Upper lobe of right lung (tissue), 1 donor: ENCODE measurements at regions of chr4 and their contacts with region 1.

Region 1: DNA sequence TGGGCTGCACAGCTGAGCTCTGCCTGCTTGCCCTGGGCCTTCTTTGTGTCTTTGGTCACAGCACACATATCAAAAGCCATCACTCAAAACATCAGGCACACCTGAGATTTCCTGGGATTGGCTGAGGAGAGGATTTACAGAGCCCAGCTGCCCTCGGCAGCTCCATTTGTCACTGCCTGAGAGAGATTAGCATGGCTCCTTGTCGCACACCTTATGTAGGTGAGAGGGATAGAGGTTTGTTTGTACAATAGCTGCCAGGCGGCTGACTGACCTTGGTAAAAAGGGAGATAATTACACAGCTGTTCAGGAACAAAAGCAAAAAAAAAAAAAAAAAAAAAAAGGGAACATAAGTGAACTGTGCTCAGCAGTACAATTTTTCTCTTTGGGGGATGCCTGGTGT is 63.2 kb downstream of the MGST2 start:
- DNase-seq: no peak
- ATAC-seq: no peak
- H3K4me3 ChIP-seq: no peak overlapping the region
- H3K27ac ChIP-seq: no peak overlapping the region
- H3K4me1 ChIP-seq: peaks cover 5% of the 10 kb centered on the region
- H3K27me3 ChIP-seq: no peaks in the 10 kb centered on the region
- CTCF ChIP-seq: no peak

Region 2: DNA sequence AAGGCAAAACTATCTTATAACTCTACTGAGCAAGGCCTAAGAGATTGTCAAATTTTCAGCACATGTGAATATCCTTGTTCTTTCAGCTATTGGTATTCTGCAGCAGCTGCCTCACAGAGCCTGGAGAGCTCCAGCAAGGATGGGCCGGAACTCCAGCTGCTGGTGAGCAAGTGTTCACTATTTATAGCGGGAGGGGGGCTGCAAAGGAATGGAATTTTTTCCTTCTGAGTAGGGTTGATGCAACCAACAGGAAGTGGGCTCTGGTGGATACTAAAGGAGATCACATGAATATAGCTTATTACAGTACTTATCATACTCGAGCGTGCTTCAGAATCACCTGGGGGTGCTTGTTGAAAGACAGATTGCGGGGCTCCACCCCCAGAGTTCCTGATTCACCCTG is 152.6 kb before region 1 on chr4:
- intact Hi-C with region 1: no loop called
- DNase-seq: no peak
- ATAC-seq: no peak
- H3K4me3 ChIP-seq: no peak overlapping the region
- H3K27ac ChIP-seq: no peak overlapping the region
- H3K4me1 ChIP-seq: no peaks in the 10 kb centered on the region
- H3K27me3 ChIP-seq: no peaks in the 10 kb centered on the region
- CTCF ChIP-seq: no peak

Region 3: DNA sequence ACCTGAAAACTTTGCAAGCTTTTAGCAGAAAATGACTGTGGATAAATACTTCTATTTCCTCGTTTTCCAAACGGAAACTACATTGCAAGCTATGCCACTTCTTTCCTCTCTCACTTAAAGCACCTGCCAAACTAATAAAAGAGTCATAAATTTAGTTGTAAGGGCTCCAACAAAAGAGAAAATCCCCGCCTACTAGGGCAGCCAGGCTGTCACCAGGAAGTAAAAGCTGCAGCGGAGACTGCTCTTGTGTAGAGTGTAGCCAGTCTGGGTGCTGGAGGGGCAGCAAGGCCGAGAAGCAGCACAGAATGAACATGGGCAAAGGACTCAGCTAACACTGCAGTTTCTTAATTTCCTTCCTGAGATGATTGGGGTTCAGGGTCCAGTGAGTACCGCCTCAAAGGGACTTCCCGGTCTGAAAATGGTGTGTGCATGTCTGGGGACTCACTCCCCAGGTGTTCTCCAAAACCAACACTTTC is 514.5 kb after region 1 on chr4:
- intact Hi-C with region 1: loop called (anchors 10 kb)
- DNase-seq: peak; percentile 67
- ATAC-seq: peak; percentile 76
- H3K4me3 ChIP-seq: no peak overlapping the region
- H3K27ac ChIP-seq: peak overlapping the region; percentile 67
- H3K4me1 ChIP-seq: peaks cover 22% of the 10 kb centered on the region
- H3K27me3 ChIP-seq: no peaks in the 10 kb centered on the region
- CTCF ChIP-seq: no peak